Activated naive CD4-positive, alpha-beta T cell treated with anti-CD3 and anti-CD28 coated beads for 36 hours (primary cell): ENCODE measurements at regions of chr3 and their contacts with region 1.

Region 1: GRCh38 chr3:169764452-169765274 is at the start of gene TERC:
- DNase-seq: peak; percentile 94
- H3K4me3 Mint-ChIP-seq: peak within 1 kb of the TSS; percentile 97
- H3K27ac Mint-ChIP-seq: peak within 1 kb of the TSS; percentile 99
- H3K4me1 Mint-ChIP-seq: peaks cover 19% of the 10 kb centered on the region
- H3K27me3 Mint-ChIP-seq: no peaks in the 10 kb centered on the region
- total RNA-seq, gene TERC: 16.0 to 20.4 TPM

Region 2: DNA sequence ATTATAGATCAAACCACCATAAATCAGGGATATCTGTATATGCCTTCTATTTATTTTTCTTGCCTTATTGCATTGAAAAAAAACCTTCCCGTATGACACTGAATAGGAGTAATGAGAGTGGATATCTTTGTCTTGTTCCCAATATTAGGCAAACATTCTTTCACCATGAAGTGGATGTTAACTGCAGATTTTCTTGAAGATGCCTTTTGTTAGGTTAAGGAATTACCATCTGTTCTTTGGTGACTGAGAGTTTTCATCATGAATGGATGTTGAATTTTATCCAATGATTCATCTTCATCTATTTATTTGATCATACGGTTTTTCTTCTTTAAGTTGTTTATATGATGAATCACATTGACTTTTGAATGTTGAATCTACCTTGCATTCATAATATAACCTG is 54.0 kb before region 1 on chr3:
- CTCF ChIA-PET with region 1: no interaction called
- intact Hi-C with region 1: no loop called
- DNase-seq: no peak
- H3K4me3 Mint-ChIP-seq: no peak overlapping the region
- H3K27ac Mint-ChIP-seq: no peak overlapping the region
- H3K4me1 Mint-ChIP-seq: no peaks in the 10 kb centered on the region
- H3K27me3 Mint-ChIP-seq: peaks cover 5% of the 10 kb centered on the region

Region 3: DNA sequence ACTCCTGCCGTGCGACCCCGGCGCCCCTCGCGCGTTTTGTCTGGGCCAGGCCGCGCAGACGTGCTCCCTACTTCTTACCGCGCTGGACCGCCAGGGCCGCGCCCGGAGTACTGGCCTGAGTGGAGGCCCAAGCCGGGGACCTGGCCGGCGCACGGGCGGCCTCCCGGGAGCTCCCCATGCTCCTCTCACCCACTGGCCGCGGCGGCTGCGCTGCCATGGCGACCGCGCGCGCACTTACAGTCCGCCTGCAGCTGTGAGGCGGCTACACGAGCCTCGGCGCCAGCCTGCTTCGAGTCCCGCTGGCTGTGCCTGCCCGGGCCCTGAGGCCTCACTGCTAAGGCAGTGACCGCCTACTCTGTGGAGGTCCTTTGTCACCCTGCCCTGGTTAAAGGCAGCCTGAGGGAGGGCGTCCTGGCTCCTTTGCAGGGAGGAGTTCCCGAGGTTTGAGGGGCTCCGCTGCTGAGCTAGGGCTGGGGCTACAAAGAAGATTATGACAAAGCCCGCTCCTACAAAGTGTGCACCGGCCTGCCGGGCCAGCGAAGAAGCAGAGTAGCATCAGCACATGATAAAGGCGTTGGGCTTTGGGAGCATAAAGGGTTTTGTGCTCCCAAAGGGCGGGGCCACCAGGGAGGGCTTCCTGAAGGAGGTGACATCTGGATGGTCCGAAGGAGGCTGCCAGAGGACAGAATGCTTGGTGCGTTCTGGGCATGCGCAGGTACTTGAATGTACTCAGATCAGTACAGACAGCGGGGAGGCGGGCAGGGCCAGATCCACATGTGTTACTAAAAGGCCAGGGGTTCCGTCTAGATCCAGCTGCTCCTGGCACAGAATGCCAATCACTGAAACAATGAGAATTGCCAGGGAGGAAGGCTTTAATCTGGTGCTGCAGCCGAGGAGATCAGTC is 47.9 kb after region 1 on chr3 and contains the starts of genes LRRC34 and LRRIQ4:
- CTCF ChIA-PET with region 1: no interaction called
- intact Hi-C with region 1: loop called (anchors 1 kb)
- DNase-seq: peak; percentile 91
- H3K4me3 Mint-ChIP-seq: peak within 1 kb of the TSS; percentile 82
- H3K27ac Mint-ChIP-seq: peak within 1 kb of the TSS; percentile 79
- H3K4me1 Mint-ChIP-seq: peaks cover 19% of the 10 kb centered on the region
- H3K27me3 Mint-ChIP-seq: no peaks in the 10 kb centered on the region
- total RNA-seq, gene LRRC34: 3.8 to 3.9 TPM
- total RNA-seq, gene LRRIQ4: 0.12 TPM in 1 of 2 experiments, not detected in the other

Region 4: DNA sequence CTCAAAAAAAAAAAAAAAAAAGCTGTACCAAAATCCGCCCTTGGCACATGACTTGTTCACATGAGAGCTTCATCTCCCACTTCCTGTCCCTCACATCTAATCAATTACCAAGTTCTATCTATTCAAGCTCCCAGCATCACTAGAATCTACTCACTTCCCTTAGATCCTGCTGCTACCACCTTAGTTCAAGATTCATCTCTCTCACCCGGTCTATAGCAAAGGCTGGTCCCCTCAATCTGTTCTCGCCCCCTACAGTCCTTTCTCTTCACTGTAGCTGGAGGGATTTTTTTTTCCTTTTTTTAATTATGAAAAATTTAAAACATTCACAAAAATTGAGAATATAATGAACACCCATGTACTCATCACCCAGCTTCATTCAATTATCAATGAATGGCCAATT is 256.4 kb after region 1 on chr3:
- CTCF ChIA-PET with region 1: no interaction called
- intact Hi-C with region 1: loop called (anchors 1 kb)
- DNase-seq: no peak
- H3K4me3 Mint-ChIP-seq: no peak overlapping the region
- H3K27ac Mint-ChIP-seq: no peak overlapping the region
- H3K4me1 Mint-ChIP-seq: peaks cover 21% of the 10 kb centered on the region
- H3K27me3 Mint-ChIP-seq: no peaks in the 10 kb centered on the region

Region 5: DNA sequence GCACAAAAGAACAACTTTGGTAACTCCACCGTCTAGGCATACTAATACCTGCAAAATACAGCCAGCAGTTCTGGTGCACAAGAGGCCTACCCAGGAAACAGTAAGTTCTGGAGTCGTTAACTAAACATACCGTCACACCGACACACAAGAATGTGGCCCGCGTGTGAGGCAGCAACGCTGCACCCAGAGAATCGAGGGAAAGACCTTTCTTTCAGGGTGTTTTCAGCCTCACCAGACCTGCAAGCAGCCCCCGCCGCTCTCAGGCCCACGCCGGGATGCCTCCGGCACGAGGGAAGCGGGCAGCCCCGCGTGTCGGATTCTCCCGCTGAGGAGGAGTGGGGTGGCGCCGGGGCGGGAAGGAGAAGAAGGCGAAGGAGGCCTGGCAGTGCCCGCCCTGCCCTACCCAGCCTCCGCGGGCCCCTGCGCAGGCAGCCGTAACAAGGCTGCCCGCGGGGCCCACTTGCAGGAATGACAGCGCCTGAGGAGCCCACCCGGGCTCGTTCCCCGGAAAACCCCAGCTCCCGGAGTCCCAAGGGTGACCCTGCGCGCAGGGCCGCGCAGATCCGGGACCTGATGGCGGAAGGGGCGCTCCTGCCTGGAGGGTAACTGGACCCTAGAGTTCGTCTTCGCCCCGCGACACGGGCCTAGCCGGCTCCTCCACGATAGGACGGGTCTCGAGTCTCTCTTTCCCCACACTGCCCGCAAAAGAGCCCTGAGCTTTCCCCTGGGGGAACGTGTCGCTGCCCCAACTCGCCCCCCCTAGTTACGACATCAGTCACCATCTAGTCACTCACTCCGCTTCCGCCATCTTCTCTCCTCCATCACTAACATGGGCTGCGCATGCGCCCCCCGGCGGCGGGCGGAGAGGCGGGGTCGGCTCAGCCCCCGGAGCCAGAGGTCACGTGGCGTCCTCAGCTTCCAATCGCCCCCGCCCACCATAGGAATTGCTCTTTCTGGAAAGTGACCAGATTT is 416.5 kb after region 1 on chr3 and contains the start of gene PHC3:
- CTCF ChIA-PET with region 1: no interaction called
- intact Hi-C with region 1: loop called (anchors 1 kb)
- DNase-seq: peak; percentile 93
- H3K4me3 Mint-ChIP-seq: peak within 1 kb of the TSS; percentile 97
- H3K27ac Mint-ChIP-seq: peak within 1 kb of the TSS; percentile 100
- H3K4me1 Mint-ChIP-seq: peaks cover 23% of the 10 kb centered on the region
- H3K27me3 Mint-ChIP-seq: no peaks in the 10 kb centered on the region
- total RNA-seq, gene PHC3: 48.7 to 50.4 TPM

Region 6: DNA sequence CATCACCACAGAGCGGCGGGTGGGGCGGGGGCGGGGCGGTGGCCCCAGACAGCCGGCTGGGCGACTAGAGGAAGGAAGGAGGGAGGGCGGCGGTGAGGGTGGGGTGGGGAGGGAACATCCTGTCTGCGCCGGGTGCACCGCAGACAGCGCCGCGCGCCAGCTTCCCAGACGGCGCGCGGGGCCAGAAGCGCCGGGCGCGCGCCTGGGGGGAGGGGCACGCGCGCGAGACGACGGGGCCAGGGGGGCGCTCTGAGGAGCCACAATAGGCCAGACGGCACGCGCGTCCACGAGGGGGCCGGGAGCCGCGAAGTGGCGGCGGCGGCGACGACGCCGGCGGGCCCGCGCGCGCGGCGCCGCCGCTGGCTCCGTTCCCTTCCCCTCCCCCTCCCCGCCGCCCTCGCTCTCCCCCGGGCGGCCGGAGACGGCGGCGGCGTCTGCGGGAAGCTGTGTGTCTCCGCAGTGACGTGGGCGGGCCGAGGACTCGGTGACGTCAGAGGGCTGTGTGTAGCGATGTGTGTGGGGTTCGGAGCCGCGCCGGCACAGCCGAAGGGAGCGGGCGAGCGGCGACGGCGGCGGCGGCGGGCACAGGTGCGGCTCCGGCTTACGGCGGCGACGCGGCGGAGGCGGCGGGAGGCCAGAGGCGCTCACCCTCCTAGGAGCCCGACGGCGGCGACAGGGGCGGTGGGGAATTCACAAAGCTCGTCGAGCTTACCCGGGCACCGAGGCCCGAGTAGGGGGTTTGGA is 592.7 kb after region 1 on chr3 and contains the start of gene SKIL:
- CTCF ChIA-PET with region 1: no interaction called
- intact Hi-C with region 1: loop called (anchors 1 kb)
- DNase-seq: peak; percentile 97
- H3K4me3 Mint-ChIP-seq: peak within 1 kb of the TSS; percentile 96
- H3K27ac Mint-ChIP-seq: peak within 1 kb of the TSS; percentile 95
- H3K4me1 Mint-ChIP-seq: peaks cover 32% of the 10 kb centered on the region
- H3K27me3 Mint-ChIP-seq: no peaks in the 10 kb centered on the region
- total RNA-seq, gene SKIL: 16.3 to 17.5 TPM

Region 7: DNA sequence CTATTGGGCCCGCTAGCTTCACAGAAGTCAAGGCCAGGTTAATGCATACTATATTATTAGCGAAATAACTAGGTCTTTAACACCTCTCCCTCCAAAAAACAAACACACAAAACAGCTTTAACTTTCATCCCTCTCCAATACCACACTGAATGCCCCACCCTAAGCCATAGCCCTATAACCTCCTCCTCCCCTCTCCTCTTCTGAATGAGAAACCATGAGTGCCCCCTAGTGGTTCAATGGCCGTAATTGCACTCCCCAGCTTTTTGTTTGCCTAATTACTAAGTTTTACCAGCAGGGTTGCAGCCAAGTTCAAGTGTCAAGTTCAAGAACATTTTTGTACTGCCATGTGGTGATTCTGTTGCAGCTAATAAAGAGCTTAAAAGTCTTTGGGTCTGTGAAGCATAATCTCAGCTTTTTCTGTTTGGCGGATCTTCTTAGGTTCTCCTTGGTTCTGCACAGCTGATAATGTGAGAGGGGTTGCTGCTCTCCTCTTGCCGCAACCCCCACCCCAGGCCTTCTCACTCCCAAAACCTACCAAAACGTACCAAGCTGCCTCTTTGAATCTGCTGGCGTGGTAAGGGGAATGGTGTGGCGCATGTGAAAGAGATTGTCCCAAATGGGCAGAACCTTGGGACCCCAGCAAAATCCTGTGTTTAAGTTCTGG is 1047.4 kb after region 1 on chr3:
- CTCF ChIA-PET with region 1: no interaction called
- intact Hi-C with region 1: loop called (anchors 1 kb)
- DNase-seq: peak; percentile 81
- H3K4me3 Mint-ChIP-seq: no peak overlapping the region
- H3K27ac Mint-ChIP-seq: no peak overlapping the region
- H3K4me1 Mint-ChIP-seq: no peaks in the 10 kb centered on the region
- H3K27me3 Mint-ChIP-seq: no peaks in the 10 kb centered on the region